Posterior vena cava (tissue), 2 donors: ENCODE measurements at regions of chr10 and their contacts with region 1.

Region 1: DNA sequence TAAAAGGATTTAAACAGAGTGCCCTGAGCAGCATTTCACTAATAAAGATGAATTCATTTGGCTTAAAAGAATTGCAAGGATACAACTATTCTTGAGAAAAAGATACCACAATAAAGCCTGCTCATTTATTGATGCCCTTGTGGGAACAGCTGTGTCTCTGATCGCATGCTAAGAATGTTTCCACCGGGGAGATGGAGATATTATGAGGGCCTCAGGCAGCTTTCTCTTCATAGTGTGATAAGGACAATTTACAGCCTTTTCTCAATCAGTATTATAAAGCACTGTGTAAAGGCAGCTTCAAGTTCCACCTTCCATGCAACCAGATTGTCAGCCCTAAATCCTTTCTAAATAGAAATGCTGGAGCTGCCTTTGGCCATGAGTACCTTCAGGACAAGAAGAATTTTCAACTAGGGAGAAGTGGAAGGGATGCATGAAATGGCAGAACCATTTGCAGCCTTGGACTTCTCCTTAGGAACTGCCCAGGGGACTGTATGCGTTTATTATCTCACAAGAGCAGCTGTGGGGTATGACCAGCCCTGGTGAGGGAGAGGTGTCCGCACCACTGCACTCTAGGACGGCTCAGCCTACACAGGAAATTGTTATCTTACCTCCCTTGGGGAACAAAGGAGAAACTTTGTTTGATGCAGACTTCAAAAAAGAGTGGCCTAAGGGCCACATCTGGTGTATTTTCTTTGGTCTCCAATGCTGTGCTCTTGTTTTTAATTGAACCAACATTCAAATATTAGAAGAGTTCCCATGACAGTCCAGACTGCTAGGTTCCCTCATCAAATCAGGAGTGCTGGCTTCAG is 116.9 kb upstream of the PCGF5 start:
- DNase-seq: no peak

Region 2: DNA sequence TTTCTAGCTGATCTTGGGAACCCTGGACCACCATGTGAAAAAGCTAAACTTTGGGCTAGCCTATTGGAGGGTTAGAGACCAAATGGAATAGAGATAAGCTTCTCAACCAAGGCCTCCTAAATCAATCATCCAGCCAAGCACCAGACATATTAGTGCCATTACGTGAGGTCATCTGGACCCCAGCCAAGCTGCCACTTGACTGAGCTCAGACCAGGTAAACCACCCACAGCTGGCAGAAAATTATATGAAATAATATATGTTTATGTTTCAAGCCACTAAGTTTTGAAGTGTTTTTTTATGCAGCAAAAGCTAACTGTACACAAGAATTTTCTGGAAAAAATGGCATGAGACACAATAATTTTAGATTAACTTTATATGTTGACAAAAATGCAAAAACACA is 34.2 kb after region 1 on chr10:
- intact Hi-C with region 1: loop called in 1 of 2 experiments (anchors 1 kb)
- DNase-seq: no peak

Region 3: DNA sequence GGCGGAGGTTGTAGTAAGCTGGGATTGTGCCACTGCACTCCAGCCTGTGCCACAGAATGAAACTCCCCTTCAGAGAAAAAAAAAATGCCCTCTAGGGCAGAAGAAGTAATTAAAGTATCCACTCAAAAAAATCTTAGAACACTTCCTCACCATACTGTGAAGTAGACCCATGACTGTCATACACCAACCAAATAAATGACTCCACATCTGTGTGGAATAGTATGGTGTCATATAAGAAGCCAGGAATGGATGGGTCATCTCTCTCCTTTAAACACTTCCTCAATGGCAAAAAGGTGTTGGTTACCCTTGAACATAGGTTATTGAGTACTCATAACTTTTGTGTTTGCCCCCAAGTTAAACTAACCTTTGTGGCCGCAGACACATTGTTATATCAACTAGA is 68.8 kb after region 1 on chr10:
- intact Hi-C with region 1: no loop called
- DNase-seq: no peak